Naive thymus-derived CD4-positive, alpha-beta T cell (primary cell): ENCODE measurements at regions of chr18 and their contacts with region 1.

Region 1: GRCh38 chr18:61893971-61894750 is 1.4 kb upstream of the RNF152 start:
- DNase-seq: peak; percentile 30 to 73 (median 57)
- ATAC-seq: peak; percentile 93
- H3K4me3 ChIP-seq: peak overlapping the region; percentile 57
- H3K4me3 Mint-ChIP-seq: peak overlapping the region; percentile 71 to 97 (median 84)
- H3K27ac ChIP-seq: no peak overlapping the region
- H3K27ac Mint-ChIP-seq: no peak overlapping the region
- H3K4me1 ChIP-seq: peaks cover 4 to 5% of the 10 kb centered on the region in 2 donors
- H3K4me1 Mint-ChIP-seq: peaks cover 9 to 16% (median 13%) of the 10 kb centered on the region in 7 donors
- H3K27me3 ChIP-seq: peaks cover 0 to 5% of the 10 kb centered on the region in 2 donors
- H3K27me3 Mint-ChIP-seq: peaks cover 23 to 78% (median 44%) of the 10 kb centered on the region in 5 donors

Region 2: DNA sequence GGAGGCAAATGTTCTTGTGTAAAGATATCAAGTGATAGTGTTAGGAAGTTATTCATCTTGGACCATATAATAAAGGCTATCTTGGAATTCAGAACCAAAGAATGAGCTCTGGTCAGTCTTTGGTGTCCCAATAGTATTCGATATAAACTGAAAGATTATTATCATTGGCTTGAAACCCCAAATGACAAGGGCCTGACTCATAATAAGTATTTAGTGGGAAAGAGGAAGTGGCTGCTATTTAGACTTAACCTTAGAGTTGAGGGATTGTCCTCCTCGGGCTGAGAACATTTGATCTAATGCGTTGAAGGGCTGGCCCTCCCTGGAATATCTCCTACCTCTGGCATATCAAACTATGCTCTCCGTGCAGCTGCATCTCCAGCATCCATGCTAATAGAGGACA is 493.4 kb before region 1 on chr18:
- CTCF ChIA-PET with region 1: no interaction called
- POLR2A ChIA-PET with region 1: no interaction called
- intact Hi-C with region 1: no loop called
- DNase-seq: no peak
- ATAC-seq: no peak
- H3K4me3 ChIP-seq: no peak overlapping the region
- H3K4me3 Mint-ChIP-seq: no peak overlapping the region
- H3K27ac ChIP-seq: no peak overlapping the region
- H3K27ac Mint-ChIP-seq: no peak overlapping the region
- H3K4me1 ChIP-seq: no peaks in the 10 kb centered on the region
- H3K4me1 Mint-ChIP-seq: no peaks in the 10 kb centered on the region
- H3K27me3 ChIP-seq: no peaks in the 10 kb centered on the region
- H3K27me3 Mint-ChIP-seq: peaks cover 0 to 19% (median 11%) of the 10 kb centered on the region in 5 donors

Region 3: DNA sequence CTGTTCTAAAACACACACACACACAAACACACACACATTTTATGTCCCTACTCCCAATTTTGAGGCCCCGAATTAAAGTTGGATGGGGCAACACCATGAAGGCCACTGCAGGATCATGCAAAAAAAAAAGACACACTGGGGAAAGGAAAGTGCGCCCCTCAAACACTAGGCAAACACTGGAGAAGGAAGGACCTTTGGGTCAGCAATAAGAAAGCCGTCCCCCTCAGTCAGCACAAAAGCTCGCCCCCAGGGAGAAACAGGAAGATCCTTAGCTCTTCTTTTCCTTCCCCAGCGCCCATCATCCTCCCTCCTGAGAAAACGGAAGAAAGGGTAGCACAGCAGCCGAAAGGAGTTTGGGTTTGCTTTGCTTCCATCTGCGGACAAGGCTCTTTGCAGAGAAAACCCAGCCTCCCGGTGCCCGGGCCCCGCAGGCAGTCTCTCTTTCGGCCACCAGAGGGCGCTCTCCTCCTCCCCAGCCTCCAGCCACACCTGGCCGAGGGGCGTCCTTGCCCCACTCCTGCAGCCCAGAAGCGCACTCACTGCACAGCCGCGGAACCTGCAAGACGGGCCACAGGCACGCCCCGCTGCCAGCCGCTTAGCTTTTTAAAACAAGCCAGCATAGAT is 312.5 kb before region 1 on chr18:
- CTCF ChIA-PET with region 1: no interaction called
- POLR2A ChIA-PET with region 1: no interaction called
- intact Hi-C with region 1: loop called in 1 of 2 experiments (anchors 1 kb)
- DNase-seq: peak; percentile 30 to 71 (median 58)
- ATAC-seq: peak; percentile 81
- H3K4me3 ChIP-seq: no peak overlapping the region
- H3K4me3 Mint-ChIP-seq: peak overlapping the region in 6 of 10 donors; percentile 16 to 70 (median 44)
- H3K27ac ChIP-seq: no peak overlapping the region
- H3K27ac Mint-ChIP-seq: peak overlapping the region in 2 of 9 donors; percentile 38 to 81
- H3K4me1 ChIP-seq: peaks cover 0 to 5% of the 10 kb centered on the region in 2 donors
- H3K4me1 Mint-ChIP-seq: peaks cover 5 to 12% (median 9%) of the 10 kb centered on the region in 7 donors
- H3K27me3 ChIP-seq: peaks cover 0 to 6% of the 10 kb centered on the region in 2 donors
- H3K27me3 Mint-ChIP-seq: peaks cover 40 to 76% (median 56%) of the 10 kb centered on the region in 5 donors

Region 4: GRCh38 chr18:61635901-61636528 is 258.1 kb before region 1 on chr18:
- CTCF ChIA-PET with region 1: no interaction called
- POLR2A ChIA-PET with region 1: no interaction called
- intact Hi-C with region 1: loop called (anchors 1 to 5 kb)
- DNase-seq: peak in 6 of 9 donors; percentile 18 to 38 (median 31)
- ATAC-seq: peak; percentile 45
- H3K4me3 ChIP-seq: no peak overlapping the region
- H3K4me3 Mint-ChIP-seq: no peak overlapping the region
- H3K27ac ChIP-seq: no peak overlapping the region
- H3K27ac Mint-ChIP-seq: no peak overlapping the region
- H3K4me1 ChIP-seq: no peaks in the 10 kb centered on the region
- H3K4me1 Mint-ChIP-seq: peaks cover 0 to 4% (median 0%) of the 10 kb centered on the region in 7 donors
- H3K27me3 ChIP-seq: no peaks in the 10 kb centered on the region
- H3K27me3 Mint-ChIP-seq: peaks cover 3 to 18% (median 12%) of the 10 kb centered on the region in 5 donors

Region 5: DNA sequence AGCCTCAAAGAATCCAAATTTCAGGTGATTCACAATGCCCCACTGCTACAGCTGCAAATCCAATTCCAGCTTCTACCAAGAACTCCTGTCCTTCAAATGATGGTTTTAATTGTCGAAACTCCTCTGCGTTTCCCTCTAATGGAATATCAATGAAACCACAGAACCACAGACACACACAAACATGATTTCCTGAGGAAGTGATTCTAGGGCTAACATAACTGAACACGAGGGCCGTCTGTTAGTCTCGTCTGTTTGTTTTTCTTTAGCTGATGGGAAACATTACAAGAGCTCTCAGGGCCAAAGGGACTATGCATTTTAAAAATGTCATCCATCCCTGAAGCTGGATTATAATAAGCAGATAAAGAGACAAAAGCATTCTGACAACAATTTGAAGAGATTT is 60.8 kb before region 1 on chr18:
- CTCF ChIA-PET with region 1: no interaction called
- POLR2A ChIA-PET with region 1: no interaction called
- intact Hi-C with region 1: no loop called
- DNase-seq: peak in 4 of 9 donors; percentile 0 to 19 (median 9)
- ATAC-seq: peak; percentile 49
- H3K4me3 ChIP-seq: no peak overlapping the region
- H3K4me3 Mint-ChIP-seq: peak overlapping the region in 9 of 10 donors; percentile 2 to 80 (median 64)
- H3K27ac ChIP-seq: no peak overlapping the region
- H3K27ac Mint-ChIP-seq: peak overlapping the region in 3 of 9 donors; percentile 29 to 49 (median 47)
- H3K4me1 ChIP-seq: peaks cover 6 to 18% of the 10 kb centered on the region in 2 donors
- H3K4me1 Mint-ChIP-seq: peaks cover 15 to 25% (median 19%) of the 10 kb centered on the region in 7 donors
- H3K27me3 ChIP-seq: no peaks in the 10 kb centered on the region
- H3K27me3 Mint-ChIP-seq: peaks cover 0 to 31% (median 4%) of the 10 kb centered on the region in 5 donors

Region 6: GRCh38 chr18:61882296-61883004 is 11.7 kb before region 1 on chr18:
- CTCF ChIA-PET with region 1: no interaction called
- POLR2A ChIA-PET with region 1: no interaction called
- intact Hi-C with region 1: no loop called
- DNase-seq: no peak
- ATAC-seq: no peak
- H3K4me3 ChIP-seq: no peak overlapping the region
- H3K4me3 Mint-ChIP-seq: no peak overlapping the region
- H3K27ac ChIP-seq: no peak overlapping the region
- H3K27ac Mint-ChIP-seq: no peak overlapping the region
- H3K4me1 ChIP-seq: no peaks in the 10 kb centered on the region
- H3K4me1 Mint-ChIP-seq: no peaks in the 10 kb centered on the region
- H3K27me3 ChIP-seq: no peaks in the 10 kb centered on the region
- H3K27me3 Mint-ChIP-seq: peaks cover 9 to 20% (median 9%) of the 10 kb centered on the region in 5 donors

Region 7: GRCh38 chr18:61949946-61950345 is 55.8 kb after region 1 on chr18:
- CTCF ChIA-PET with region 1: no interaction called
- POLR2A ChIA-PET with region 1: no interaction called
- intact Hi-C with region 1: loop called in 1 of 2 experiments (anchors 5 kb)
- DNase-seq: no peak
- ATAC-seq: no peak
- H3K4me3 ChIP-seq: no peak overlapping the region
- H3K4me3 Mint-ChIP-seq: no peak overlapping the region
- H3K27ac ChIP-seq: no peak overlapping the region
- H3K27ac Mint-ChIP-seq: peak overlapping the region in 1 of 9 donors; percentile 68
- H3K4me1 ChIP-seq: peaks cover 0 to 5% of the 10 kb centered on the region in 2 donors
- H3K4me1 Mint-ChIP-seq: peaks cover 0 to 19% (median 0%) of the 10 kb centered on the region in 7 donors
- H3K27me3 ChIP-seq: no peaks in the 10 kb centered on the region
- H3K27me3 Mint-ChIP-seq: peaks cover 0 to 59% (median 0%) of the 10 kb centered on the region in 5 donors

Region 8: GRCh38 chr18:62088156-62088555 is 194.0 kb after region 1 on chr18:
- CTCF ChIA-PET with region 1: no interaction called
- POLR2A ChIA-PET with region 1: no interaction called
- intact Hi-C with region 1: loop called in 1 of 2 experiments (anchors 5 kb)
- DNase-seq: peak in 7 of 9 donors; percentile 33 to 74 (median 61)
- ATAC-seq: peak; percentile 80
- H3K4me3 ChIP-seq: no peak overlapping the region
- H3K4me3 Mint-ChIP-seq: peak overlapping the region in 7 of 10 donors; percentile 25 to 67 (median 51)
- H3K27ac ChIP-seq: no peak overlapping the region
- H3K27ac Mint-ChIP-seq: peak overlapping the region in 4 of 9 donors; percentile 5 to 30 (median 20)
- H3K4me1 ChIP-seq: peaks cover 0 to 18% of the 10 kb centered on the region in 2 donors
- H3K4me1 Mint-ChIP-seq: peaks cover 7 to 48% (median 36%) of the 10 kb centered on the region in 7 donors
- H3K27me3 ChIP-seq: no peaks in the 10 kb centered on the region
- H3K27me3 Mint-ChIP-seq: no peaks in the 10 kb centered on the region

Region 9: DNA sequence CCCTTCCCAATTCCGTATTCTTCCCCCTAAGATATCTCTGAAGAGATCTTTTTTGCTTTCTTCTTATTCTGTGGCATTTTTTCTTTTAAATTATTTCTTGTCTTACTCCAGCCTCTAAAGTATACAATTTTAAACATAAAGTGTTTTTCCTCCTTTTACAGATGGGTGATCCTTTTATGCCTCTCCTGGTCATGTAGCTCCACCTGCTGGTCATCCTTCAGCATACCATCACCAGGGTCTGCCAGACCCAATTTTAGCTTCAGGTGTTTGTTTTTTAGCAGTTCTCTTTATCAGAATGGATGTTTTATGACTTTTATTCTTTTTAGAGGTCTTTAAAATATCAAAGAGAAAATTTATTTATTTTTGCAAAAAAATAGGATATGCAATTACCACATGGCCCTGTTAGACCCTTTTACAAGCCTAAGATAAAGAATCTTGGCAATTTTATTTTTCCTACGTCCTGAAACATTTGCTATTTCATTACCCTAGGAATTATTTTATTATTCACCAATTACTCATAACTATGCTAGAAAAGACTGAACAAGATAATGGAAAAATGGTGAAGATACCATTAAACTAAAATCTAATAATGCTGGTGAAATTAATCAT is 237.2 kb after region 1 on chr18:
- CTCF ChIA-PET with region 1: no interaction called
- POLR2A ChIA-PET with region 1: no interaction called
- intact Hi-C with region 1: loop called in 1 of 2 experiments (anchors 1 kb)
- DNase-seq: peak; percentile 11 to 73 (median 57)
- ATAC-seq: peak; percentile 71
- H3K4me3 ChIP-seq: no peak overlapping the region
- H3K4me3 Mint-ChIP-seq: no peak overlapping the region
- H3K27ac ChIP-seq: no peak overlapping the region
- H3K27ac Mint-ChIP-seq: no peak overlapping the region
- H3K4me1 ChIP-seq: no peaks in the 10 kb centered on the region
- H3K4me1 Mint-ChIP-seq: peaks cover 0 to 5% (median 0%) of the 10 kb centered on the region in 7 donors
- H3K27me3 ChIP-seq: no peaks in the 10 kb centered on the region
- H3K27me3 Mint-ChIP-seq: no peaks in the 10 kb centered on the region

Region 10: DNA sequence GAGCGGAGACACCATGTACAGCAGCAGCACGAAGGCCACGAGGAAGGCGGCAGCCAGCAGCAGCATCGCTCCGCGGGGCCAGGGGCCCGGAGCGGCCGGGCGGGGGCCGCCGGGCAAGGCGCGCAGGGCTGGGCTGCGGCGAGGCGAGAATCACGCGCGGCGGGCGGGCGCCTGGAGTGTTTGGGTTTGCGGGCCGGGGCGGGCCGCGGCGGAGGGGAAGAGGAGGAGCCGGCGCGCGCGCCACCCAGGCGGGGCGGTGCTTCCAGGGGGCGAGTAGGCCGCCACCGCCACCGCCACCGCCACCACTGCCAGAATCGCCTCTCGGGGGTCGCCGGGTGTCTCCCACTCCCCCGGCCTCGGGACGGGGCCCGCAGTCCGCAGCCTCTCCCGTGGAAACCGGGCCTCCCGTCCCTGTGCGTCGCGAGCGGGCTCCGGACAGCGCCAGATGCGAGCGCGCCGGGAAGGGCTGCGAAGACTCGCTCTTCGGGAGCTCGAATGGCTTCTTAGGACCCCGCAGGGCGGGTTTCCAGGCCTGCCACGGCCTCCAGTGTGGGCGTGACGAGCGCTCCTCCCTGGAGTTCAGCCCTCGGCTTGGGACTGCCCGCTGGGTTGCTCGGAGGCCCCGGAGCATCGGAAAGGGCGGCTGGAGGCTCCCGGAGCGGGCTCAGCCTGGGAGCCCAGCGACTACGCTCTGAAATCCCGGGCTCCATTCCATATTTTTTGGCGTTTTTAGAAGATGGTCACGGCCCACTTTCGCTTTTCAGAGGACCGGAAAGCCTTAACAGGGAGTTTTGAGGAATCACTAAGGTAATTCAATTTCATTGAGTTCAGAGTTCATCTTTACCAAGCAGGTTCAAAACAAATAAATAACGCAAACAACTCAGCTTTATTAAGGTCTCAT is 1473.1 kb after region 1 on chr18 and contains the start of gene KDSR:
- CTCF ChIA-PET with region 1: no interaction called
- POLR2A ChIA-PET with region 1: no interaction called
- intact Hi-C with region 1: loop called in 1 of 2 experiments (anchors 10 kb)
- DNase-seq: peak; percentile 71 to 90 (median 79)
- ATAC-seq: peak; percentile 92
- H3K4me3 ChIP-seq: peak within 1 kb of the TSS; percentile 92
- H3K4me3 Mint-ChIP-seq: peak within 1 kb of the TSS; percentile 85 to 99 (median 94)
- H3K27ac ChIP-seq: peak within 1 kb of the TSS; percentile 77
- H3K27ac Mint-ChIP-seq: peak within 1 kb of the TSS; percentile 84 to 92 (median 89)
- H3K4me1 ChIP-seq: peaks cover 6 to 29% of the 10 kb centered on the region in 2 donors
- H3K4me1 Mint-ChIP-seq: peaks cover 32 to 56% (median 41%) of the 10 kb centered on the region in 7 donors
- H3K27me3 ChIP-seq: no peaks in the 10 kb centered on the region
- H3K27me3 Mint-ChIP-seq: no peaks in the 10 kb centered on the region
- total RNA-seq, gene KDSR: 24.4 to 57.9 (median 46.9) TPM